ENCODE measurements at regions of chr12 and their contacts with region 1.

Region 1: GRCh38 chr12:57005980-57006808 is at the start of gene ZBTB39:
- DNase-seq: peak; percentile 32
- H3K4me3 ChIP-seq: peak within 1 kb of the TSS; percentile 75 to 77
- H3K27ac ChIP-seq: peak within 1 kb of the TSS; percentile 78
- H3K4me1 ChIP-seq: no peaks in the 10 kb centered on the region
- H3K27me3 ChIP-seq: no peaks in the 10 kb centered on the region
- CTCF ChIP-seq: peak; percentile 38 to 56 (median 52)
- POLR2A ChIP-seq: no peak
- total RNA-seq, gene ZBTB39: 5.8 to 15.6 TPM

Region 2: DNA sequence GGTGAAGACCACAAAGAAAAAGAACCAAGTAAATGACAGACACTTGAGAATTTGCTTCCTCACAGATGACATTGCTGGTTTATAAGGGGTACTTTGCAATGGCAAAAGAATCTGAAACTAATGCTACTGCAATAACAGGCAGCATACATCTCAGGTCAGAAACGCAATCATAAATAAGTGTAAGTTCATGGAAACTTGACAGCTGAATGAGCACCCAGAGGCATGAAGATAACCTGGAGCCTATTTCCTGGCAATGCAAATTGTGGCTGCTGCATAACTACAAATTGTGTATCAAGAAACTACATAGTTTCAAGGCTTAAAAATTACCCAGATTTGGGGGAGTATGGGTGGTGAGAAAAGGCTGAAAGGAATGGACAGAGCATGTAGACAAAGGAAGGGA is 52.3 kb after region 1 on chr12:
- intact Hi-C with region 1: loop called (anchors 5 kb)
- DNase-seq: no peak
- H3K4me3 ChIP-seq: no peak overlapping the region
- H3K27ac ChIP-seq: no peak overlapping the region
- H3K4me1 ChIP-seq: no peaks in the 10 kb centered on the region
- H3K27me3 ChIP-seq: no peaks in the 10 kb centered on the region
- CTCF ChIP-seq: no peak
- POLR2A ChIP-seq: no peak